Panc1 (cell line): ENCODE measurements at regions of chr3 and their contacts with region 1.

Region 1: DNA sequence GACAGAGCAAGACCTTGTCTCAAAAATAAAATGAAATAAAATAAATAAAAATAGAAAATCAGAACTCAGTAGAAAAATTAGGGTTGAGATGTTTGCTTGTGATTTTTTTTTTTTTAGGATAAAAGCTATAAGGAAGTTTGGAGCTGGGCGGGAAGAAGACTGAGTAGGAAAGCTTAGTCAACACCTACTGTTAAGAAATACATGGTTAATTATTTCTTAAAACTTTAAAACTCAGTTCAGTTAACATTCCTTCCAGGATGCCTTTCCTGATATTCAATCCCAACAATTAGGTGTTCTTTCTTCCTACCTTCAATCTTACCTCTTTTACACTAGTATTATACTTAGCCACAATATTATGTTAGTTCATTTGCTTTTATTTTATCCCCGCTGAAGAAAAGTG is 246.2 kb downstream of the LSAMP start:
- DNase-seq: no peak
- ATAC-seq: no peak
- H3K4me3 ChIP-seq: no peak overlapping the region
- H3K27ac ChIP-seq: no peak overlapping the region
- H3K4me1 ChIP-seq: no peaks in the 10 kb centered on the region
- H3K27me3 ChIP-seq: no peaks in the 10 kb centered on the region
- CTCF ChIP-seq: no peak

Region 2: DNA sequence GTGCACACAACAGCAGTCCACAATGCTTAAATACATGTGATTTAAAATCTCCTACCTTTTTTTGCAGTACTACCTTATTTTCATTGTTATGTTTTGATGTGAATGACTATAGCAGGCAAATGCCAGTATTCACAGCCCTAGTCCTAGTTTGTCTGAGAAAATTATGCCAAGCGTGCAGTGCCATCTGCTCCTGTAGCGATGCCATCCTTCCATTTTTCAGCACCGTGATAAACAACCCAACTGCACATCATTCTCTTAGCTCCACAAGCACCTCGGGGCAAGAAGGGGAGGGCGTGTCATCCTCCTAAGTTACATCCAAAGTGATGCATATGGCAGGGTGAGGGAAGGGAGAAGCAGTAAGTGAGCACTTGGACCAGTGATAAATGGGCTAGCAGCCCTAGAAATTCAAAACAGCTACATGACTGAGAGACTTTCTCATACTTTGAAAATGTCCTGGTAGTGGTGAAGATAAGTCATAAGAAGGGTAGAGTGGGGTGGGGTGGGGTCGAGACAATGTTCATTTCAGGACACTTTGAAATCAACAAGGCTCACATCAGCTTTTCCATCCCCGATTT is 47.4 kb after region 1 on chr3:
- CTCF ChIA-PET with region 1: no interaction called
- POLR2A ChIA-PET with region 1: no interaction called
- in situ Hi-C with region 1: no loop called
- intact Hi-C with region 1: no loop called
- DNase-seq: no peak
- ATAC-seq: no peak
- H3K4me3 ChIP-seq: no peak overlapping the region
- H3K27ac ChIP-seq: no peak overlapping the region
- H3K4me1 ChIP-seq: no peaks in the 10 kb centered on the region
- H3K27me3 ChIP-seq: no peaks in the 10 kb centered on the region
- CTCF ChIP-seq: no peak

Region 3: GRCh38 chr3:116263842-116264545 is 64.9 kb after region 1 on chr3:
- CTCF ChIA-PET with region 1: no interaction called
- POLR2A ChIA-PET with region 1: no interaction called
- in situ Hi-C with region 1: no loop called
- intact Hi-C with region 1: no loop called
- DNase-seq: no peak
- ATAC-seq: no peak
- H3K4me3 ChIP-seq: no peak overlapping the region
- H3K27ac ChIP-seq: no peak overlapping the region
- H3K4me1 ChIP-seq: no peaks in the 10 kb centered on the region; the same call in 1 of the 2 replicates
- H3K27me3 ChIP-seq: no peaks in the 10 kb centered on the region
- CTCF ChIP-seq: no peak

Region 4: DNA sequence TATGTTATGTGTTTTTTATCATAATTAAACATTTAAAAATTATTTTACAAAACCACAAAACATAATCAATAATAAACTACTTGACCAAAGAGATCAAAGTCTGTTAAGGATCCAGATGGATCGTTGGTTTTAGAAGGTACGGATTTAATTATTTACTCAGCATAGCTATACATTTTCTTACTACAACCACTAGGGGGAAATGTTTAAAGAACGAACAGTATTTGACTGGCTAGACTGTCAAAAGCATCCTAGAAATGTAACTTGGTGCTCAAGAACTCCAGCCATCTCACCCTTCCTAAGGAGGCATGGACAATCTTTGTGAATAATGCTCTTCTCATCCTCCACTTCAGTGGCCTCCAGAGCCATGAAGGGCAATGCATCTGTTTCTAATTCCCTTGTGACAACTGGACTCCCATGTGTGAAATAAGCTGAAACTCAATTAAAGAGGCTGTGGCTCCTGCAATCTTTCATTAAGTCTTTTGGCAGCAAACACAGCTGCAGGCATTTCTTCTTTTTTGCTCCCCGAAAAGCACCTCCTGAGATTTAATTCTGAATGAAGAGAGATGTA is 415.8 kb after region 1 on chr3:
- CTCF ChIA-PET with region 1: interaction called, 11 read pairs
- POLR2A ChIA-PET with region 1: no interaction called
- in situ Hi-C with region 1: no loop called
- intact Hi-C with region 1: no loop called
- DNase-seq: no peak
- ATAC-seq: no peak
- H3K4me3 ChIP-seq: no peak overlapping the region
- H3K27ac ChIP-seq: no peak overlapping the region
- H3K4me1 ChIP-seq: no peaks in the 10 kb centered on the region
- H3K27me3 ChIP-seq: no peaks in the 10 kb centered on the region
- CTCF ChIP-seq: peak; percentile 49